WTC11 (cell line): ENCODE measurements at regions of chr10 and their contacts with region 1.

Region 1: DNA sequence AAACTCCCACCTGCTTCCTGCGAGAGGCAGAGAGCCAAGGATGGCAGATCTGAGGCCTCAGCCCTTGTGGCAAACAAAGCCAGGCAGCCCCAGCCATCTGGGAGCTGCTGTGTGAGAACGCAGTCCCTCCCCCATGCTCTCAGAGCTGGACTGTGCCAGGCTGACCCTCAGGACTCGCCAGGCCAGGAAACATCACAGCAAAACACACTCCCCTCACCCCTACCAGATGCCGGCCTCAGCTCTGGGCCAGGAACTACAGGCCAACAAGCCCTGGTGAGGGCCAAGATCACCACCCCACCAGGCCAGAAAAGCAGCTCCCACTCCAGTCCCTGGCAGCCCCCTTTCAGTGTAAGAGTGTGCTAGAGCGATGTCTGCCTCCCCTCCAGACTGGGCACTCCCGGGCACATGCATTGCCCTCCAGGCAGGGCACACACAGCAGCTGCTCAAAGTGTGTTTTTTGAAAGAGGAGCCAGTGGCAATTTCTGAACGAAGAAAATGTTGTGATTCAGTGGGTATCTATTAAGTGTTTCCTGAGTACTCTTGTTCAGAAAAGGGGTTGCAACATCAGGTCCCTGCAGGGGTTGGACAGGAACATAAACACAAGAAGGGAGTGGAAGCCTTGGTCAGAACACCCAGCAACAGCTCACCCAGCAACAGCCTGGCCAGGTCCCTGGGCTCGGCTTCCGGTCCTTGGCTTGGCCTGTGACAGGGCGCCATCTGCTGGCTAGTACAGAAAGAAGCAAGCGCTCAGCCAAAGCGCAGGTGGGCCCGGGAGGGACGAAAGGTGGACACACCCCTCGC is 18.3 kb downstream of the LRRC20 start:
- DNase-seq: peak; percentile 94
- ATAC-seq: peak; percentile 91
- H3K4me3 Mint-ChIP-seq: no peak overlapping the region
- H3K27ac Mint-ChIP-seq: peak overlapping the region; percentile 66
- H3K4me1 Mint-ChIP-seq: peaks cover 16% of the 10 kb centered on the region
- H3K27me3 Mint-ChIP-seq: no peaks in the 10 kb centered on the region
- CTCF ChIP-seq: peak; percentile 70

Region 2: GRCh38 chr10:70146489-70147258 is 217.5 kb before region 1 on chr10 and contains the start of gene TYSND1:
- CTCF ChIA-PET with region 1: interaction called, 22 read pairs
- POLR2A ChIA-PET with region 1: interaction called, 11 read pairs
- DNase-seq: peak; percentile 98
- ATAC-seq: peak; percentile 93
- H3K4me3 Mint-ChIP-seq: peak within 1 kb of the TSS; percentile 78
- H3K27ac Mint-ChIP-seq: peak within 1 kb of the TSS; percentile 96
- H3K4me1 Mint-ChIP-seq: peaks cover 16% of the 10 kb centered on the region
- H3K27me3 Mint-ChIP-seq: no peaks in the 10 kb centered on the region
- CTCF ChIP-seq: peak; percentile 17; the same call in 1 of the 2 replicates
- total RNA-seq, gene TYSND1: 18.9 to 21.3 TPM (median 20.7 TPM) in 3 replicates

Region 3: GRCh38 chr10:70255329-70256299 is 108.6 kb before region 1 on chr10:
- CTCF ChIA-PET with region 1: interaction called, 35 read pairs
- POLR2A ChIA-PET with region 1: no interaction called
- DNase-seq: no peak
- ATAC-seq: no peak; the same call in 1 of the 2 replicates
- H3K4me3 Mint-ChIP-seq: no peak overlapping the region
- H3K27ac Mint-ChIP-seq: no peak overlapping the region
- H3K4me1 Mint-ChIP-seq: 0 out of 2 replicates have a peak, but pooled peaks cover 5% of the 10 kb centered on the region
- H3K27me3 Mint-ChIP-seq: peaks cover 6% of the 10 kb centered on the region; the same call in 1 of the 2 replicates
- CTCF ChIP-seq: no peak

Region 4: DNA sequence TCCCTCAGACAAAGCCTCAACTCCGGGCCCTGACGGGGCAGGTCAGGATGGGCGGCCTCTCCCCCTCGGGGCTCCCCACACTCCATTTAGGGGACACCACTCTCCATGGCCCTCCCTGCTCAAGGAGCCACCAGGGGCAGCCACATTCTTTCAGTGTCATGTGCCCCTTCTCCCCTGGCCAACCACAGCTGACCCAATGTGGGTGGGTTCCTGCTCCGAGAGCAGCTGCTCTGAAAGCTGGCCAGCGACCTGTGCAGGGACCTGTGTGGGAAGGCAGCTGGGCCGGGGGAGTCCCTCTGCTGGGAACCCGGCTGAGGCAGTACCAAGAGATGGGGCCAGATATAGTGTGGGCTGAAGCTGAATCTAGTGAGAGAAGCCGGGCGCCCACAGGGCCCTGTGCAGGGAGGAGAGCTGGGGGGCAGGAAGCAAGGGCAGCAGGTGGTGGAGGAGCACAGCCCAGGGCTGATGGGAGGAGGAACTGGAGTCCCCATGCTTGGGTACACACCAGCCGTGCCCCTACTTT is 39.8 kb before region 1 on chr10:
- CTCF ChIA-PET with region 1: interaction called, 31 read pairs
- POLR2A ChIA-PET with region 1: no interaction called
- DNase-seq: peak; percentile 44
- ATAC-seq: peak; percentile 47
- H3K4me3 Mint-ChIP-seq: no peak overlapping the region
- H3K27ac Mint-ChIP-seq: no peak overlapping the region
- H3K4me1 Mint-ChIP-seq: peaks cover 17% of the 10 kb centered on the region
- H3K27me3 Mint-ChIP-seq: no peaks in the 10 kb centered on the region
- CTCF ChIP-seq: no peak

Region 5: GRCh38 chr10:70381471-70382421 is 17.6 kb after region 1 on chr10:
- CTCF ChIA-PET with region 1: interaction called, 53 read pairs
- POLR2A ChIA-PET with region 1: no interaction called
- DNase-seq: peak; percentile 62
- ATAC-seq: peak; percentile 16
- H3K4me3 Mint-ChIP-seq: peak overlapping the region; percentile 82
- H3K27ac Mint-ChIP-seq: no peak overlapping the region
- H3K4me1 Mint-ChIP-seq: peaks cover 46% of the 10 kb centered on the region
- H3K27me3 Mint-ChIP-seq: peaks cover 14% of the 10 kb centered on the region
- CTCF ChIP-seq: no peak